MCF 10A (cell line): ENCODE measurements at regions of chr16 and their contacts with region 1.

Region 1: GRCh38 chr16:28974437-28975157 is at the start of gene SPNS1:
- DNase-seq: peak; percentile 94
- H3K4me3 Mint-ChIP-seq: peak within 1 kb of the TSS; percentile 95
- H3K27ac Mint-ChIP-seq: peak within 1 kb of the TSS; percentile 96
- H3K4me1 Mint-ChIP-seq: peaks cover 12% of the 10 kb centered on the region
- H3K27me3 Mint-ChIP-seq: no peaks in the 10 kb centered on the region
- CTCF ChIP-seq: no peak
- total RNA-seq, gene SPNS1: 25.2 and 36.8 TPM in 2 replicates

Region 2: GRCh38 chr16:28985211-28986041 is 10.8 kb after region 1 on chr16:
- CTCF ChIA-PET with region 1: interaction called, 20 read pairs
- POLR2A ChIA-PET with region 1: interaction called, 4 read pairs
- intact Hi-C with region 1: no loop called
- DNase-seq: no peak
- H3K4me3 Mint-ChIP-seq: no peak overlapping the region
- H3K27ac Mint-ChIP-seq: no peak overlapping the region
- H3K4me1 Mint-ChIP-seq: no peaks in the 10 kb centered on the region
- H3K27me3 Mint-ChIP-seq: no peaks in the 10 kb centered on the region
- CTCF ChIP-seq: no peak

Region 3: DNA sequence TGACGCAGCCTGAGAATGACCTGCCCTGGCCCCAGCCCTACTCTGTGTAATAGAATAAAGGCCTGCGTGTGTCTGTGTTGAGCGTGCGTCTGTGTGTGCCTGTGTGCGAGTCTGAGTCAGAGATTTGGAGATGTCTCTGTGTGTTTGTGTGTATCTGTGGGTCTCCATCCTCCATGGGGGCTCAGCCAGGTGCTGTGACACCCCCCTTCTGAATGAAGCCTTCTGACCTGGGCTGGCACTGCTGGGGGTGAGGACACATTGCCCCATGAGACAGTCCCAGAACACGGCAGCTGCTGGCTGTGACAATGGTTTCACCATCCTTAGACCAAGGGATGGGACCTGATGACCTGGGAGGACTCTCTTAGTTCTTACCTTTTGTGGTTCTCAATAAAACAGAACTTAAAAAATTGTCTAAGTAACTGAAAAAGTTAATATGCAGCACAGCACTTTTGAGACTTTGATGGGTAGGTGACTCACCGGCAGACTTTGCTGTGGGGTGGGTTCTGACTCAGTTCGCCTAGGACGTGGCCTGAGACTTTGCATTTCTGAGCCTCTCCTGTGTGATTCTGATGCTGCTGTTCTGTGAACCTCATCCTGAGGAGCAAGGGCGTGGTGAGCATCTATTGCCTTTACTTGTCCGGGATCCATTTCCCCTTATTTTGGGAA is 15.9 kb after region 1 on chr16:
- CTCF ChIA-PET with region 1: interaction called, 20 read pairs
- POLR2A ChIA-PET with region 1: interaction called, 4 read pairs
- intact Hi-C with region 1: no loop called
- DNase-seq: no peak
- H3K4me3 Mint-ChIP-seq: no peak overlapping the region
- H3K27ac Mint-ChIP-seq: no peak overlapping the region
- H3K4me1 Mint-ChIP-seq: no peaks in the 10 kb centered on the region
- H3K27me3 Mint-ChIP-seq: no peaks in the 10 kb centered on the region
- CTCF ChIP-seq: no peak